ENCODE measurements at regions of chr6 and their contacts with region 1.

Region 1: GRCh38 chr6:72411872-72412708 is 209.8 kb upstream of the KCNQ5 start:
- DNase-seq: peak; percentile 72 to 89
- ATAC-seq: peak; percentile 98 to 100 (median 99)
- H3K4me3 ChIP-seq: no peak overlapping the region
- H3K4me3 Mint-ChIP-seq: no peak overlapping the region
- H3K27ac ChIP-seq: no peak overlapping the region
- H3K27ac Mint-ChIP-seq: no peak overlapping the region
- H3K4me1 ChIP-seq: no peaks in the 10 kb centered on the region
- H3K4me1 Mint-ChIP-seq: no peaks in the 10 kb centered on the region
- H3K27me3 ChIP-seq: no peaks in the 10 kb centered on the region
- H3K27me3 Mint-ChIP-seq: peaks cover 8 to 25% of the 10 kb centered on the region in 2 donors
- CTCF ChIP-seq: peak; percentile 100

Region 2: DNA sequence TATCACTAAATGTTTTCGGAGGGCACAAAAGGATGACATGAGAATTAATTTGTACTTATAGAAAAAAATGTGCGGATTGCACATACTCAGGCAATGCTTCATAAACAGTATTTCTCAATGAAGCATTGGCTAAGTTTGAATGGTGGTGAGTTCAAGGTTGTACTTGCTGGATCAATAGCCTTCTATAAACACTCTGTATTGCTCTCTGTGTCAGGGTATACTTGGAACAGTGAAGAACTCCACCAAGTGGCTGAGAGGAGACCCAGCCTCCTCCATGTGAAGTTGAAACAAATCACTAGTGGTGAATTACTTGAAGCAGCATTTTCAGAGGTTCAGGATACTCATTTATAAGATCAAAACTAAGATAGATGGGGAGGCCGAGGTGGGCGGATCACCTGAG is 165.2 kb before region 1 on chr6:
- intact Hi-C with region 1: no loop called
- DNase-seq: no peak
- ATAC-seq: no peak
- H3K4me3 ChIP-seq: no peak overlapping the region
- H3K4me3 Mint-ChIP-seq: no peak overlapping the region
- H3K27ac ChIP-seq: no peak overlapping the region
- H3K27ac Mint-ChIP-seq: no peak overlapping the region
- H3K4me1 ChIP-seq: no peaks in the 10 kb centered on the region
- H3K4me1 Mint-ChIP-seq: no peaks in the 10 kb centered on the region
- H3K27me3 ChIP-seq: no peaks in the 10 kb centered on the region
- H3K27me3 Mint-ChIP-seq: no peaks in the 10 kb centered on the region
- CTCF ChIP-seq: no peak

Region 3: DNA sequence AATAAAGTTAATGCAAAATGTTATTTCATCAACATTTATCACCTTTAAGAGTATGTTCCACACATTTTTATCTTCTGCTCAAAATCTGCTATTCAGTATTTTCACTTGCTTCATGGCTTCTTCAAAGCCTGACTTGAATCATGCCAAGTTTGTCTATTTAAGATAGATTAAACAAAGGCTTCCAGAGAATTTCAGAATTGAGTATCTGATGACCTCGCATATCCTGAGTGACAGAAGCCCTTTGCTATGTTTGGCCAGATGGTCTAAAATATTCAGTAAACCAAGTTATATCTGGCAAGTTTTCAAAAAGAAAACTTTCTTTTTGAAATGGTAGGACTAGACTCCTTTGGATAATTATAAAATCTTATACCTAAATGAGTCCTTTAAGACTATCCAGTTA is 139.1 kb before region 1 on chr6:
- intact Hi-C with region 1: no loop called
- DNase-seq: no peak
- ATAC-seq: no peak
- H3K4me3 ChIP-seq: no peak overlapping the region
- H3K4me3 Mint-ChIP-seq: no peak overlapping the region
- H3K27ac ChIP-seq: no peak overlapping the region
- H3K27ac Mint-ChIP-seq: no peak overlapping the region
- H3K4me1 ChIP-seq: no peaks in the 10 kb centered on the region
- H3K4me1 Mint-ChIP-seq: no peaks in the 10 kb centered on the region
- H3K27me3 ChIP-seq: no peaks in the 10 kb centered on the region
- H3K27me3 Mint-ChIP-seq: no peaks in the 10 kb centered on the region
- CTCF ChIP-seq: no peak

Region 4: GRCh38 chr6:72374857-72375256 is 37.2 kb before region 1 on chr6:
- intact Hi-C with region 1: no loop called
- DNase-seq: no peak
- ATAC-seq: no peak
- H3K4me3 ChIP-seq: no peak overlapping the region
- H3K4me3 Mint-ChIP-seq: no peak overlapping the region
- H3K27ac ChIP-seq: no peak overlapping the region
- H3K27ac Mint-ChIP-seq: no peak overlapping the region
- H3K4me1 ChIP-seq: no peaks in the 10 kb centered on the region
- H3K4me1 Mint-ChIP-seq: no peaks in the 10 kb centered on the region
- H3K27me3 ChIP-seq: no peaks in the 10 kb centered on the region
- H3K27me3 Mint-ChIP-seq: peaks cover 3 to 16% of the 10 kb centered on the region in 2 donors
- CTCF ChIP-seq: no peak

Region 5: GRCh38 chr6:72386324-72386723 is 25.8 kb before region 1 on chr6:
- intact Hi-C with region 1: no loop called
- DNase-seq: no peak
- ATAC-seq: no peak
- H3K4me3 ChIP-seq: no peak overlapping the region
- H3K4me3 Mint-ChIP-seq: no peak overlapping the region
- H3K27ac ChIP-seq: no peak overlapping the region
- H3K27ac Mint-ChIP-seq: no peak overlapping the region
- H3K4me1 ChIP-seq: no peaks in the 10 kb centered on the region
- H3K4me1 Mint-ChIP-seq: no peaks in the 10 kb centered on the region
- H3K27me3 ChIP-seq: peaks cover 2% of the 10 kb centered on the region
- H3K27me3 Mint-ChIP-seq: peaks cover 11 to 16% of the 10 kb centered on the region in 2 donors
- CTCF ChIP-seq: no peak

Region 6: GRCh38 chr6:73129653-73130443 is 717.8 kb after region 1 on chr6:
- intact Hi-C with region 1: loop called (anchors 1 kb)
- DNase-seq: peak; percentile 77 to 86
- ATAC-seq: peak; percentile 90 to 98 (median 95)
- H3K4me3 ChIP-seq: no peak overlapping the region
- H3K4me3 Mint-ChIP-seq: peak overlapping the region; percentile 14
- H3K27ac ChIP-seq: no peak overlapping the region
- H3K27ac Mint-ChIP-seq: no peak overlapping the region
- H3K4me1 ChIP-seq: peaks cover 3% of the 10 kb centered on the region
- H3K4me1 Mint-ChIP-seq: peaks cover 6% of the 10 kb centered on the region in 2 donors
- H3K27me3 ChIP-seq: no peaks in the 10 kb centered on the region
- H3K27me3 Mint-ChIP-seq: no peaks in the 10 kb centered on the region
- CTCF ChIP-seq: peak; percentile 94

Region 7: DNA sequence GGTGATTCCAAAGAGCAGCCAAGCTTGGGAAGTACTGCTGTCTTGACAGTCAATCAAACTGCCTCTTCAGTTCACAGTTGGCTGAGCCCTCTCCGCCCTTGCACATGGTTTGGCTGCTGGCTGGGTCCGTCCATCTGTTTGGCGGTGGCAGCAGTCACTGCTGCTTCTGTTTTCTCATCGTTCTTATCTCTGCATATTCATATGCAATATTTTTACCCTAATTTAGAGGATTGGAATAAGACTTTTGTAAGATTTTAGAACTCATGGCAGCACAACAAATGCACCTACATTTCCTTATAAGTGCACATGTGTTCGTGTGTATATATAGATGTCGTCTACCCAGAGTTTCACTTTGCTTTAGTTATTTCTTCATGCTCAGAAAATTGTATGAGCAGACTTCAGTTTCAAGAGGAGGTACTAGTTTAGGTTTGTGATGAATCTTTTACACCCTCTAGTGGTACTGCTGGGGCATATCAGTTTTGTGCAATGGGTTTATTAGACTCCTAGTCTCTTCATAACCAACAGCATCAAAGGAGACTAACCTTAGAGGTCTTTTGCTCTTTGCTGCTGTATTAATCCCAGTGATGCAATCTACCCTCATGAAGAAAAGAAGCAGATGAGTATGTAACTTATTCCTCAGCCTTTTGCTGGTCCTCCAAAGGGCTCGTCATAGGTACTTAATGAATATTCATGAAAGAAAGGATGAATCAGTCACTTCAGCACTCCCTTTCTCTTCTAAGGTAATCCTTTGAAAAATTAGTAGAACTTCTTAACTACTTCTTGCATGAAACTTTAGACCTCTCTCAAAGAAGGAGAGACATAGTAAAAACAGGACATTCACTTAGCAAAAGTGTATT is 768.9 kb after region 1 on chr6:
- intact Hi-C with region 1: loop called (anchors 1 kb)
- DNase-seq: peak in 1 of 2 donors; percentile 65
- ATAC-seq: peak; percentile 88 to 96 (median 92)
- H3K4me3 ChIP-seq: no peak overlapping the region
- H3K4me3 Mint-ChIP-seq: peak overlapping the region; percentile 63
- H3K27ac ChIP-seq: no peak overlapping the region
- H3K27ac Mint-ChIP-seq: peak overlapping the region in 1 of 2 donors; percentile 39
- H3K4me1 ChIP-seq: peaks cover 4% of the 10 kb centered on the region
- H3K4me1 Mint-ChIP-seq: peaks cover 6 to 8% of the 10 kb centered on the region in 2 donors
- H3K27me3 ChIP-seq: no peaks in the 10 kb centered on the region
- H3K27me3 Mint-ChIP-seq: no peaks in the 10 kb centered on the region
- CTCF ChIP-seq: peak; percentile 83

Region 8: DNA sequence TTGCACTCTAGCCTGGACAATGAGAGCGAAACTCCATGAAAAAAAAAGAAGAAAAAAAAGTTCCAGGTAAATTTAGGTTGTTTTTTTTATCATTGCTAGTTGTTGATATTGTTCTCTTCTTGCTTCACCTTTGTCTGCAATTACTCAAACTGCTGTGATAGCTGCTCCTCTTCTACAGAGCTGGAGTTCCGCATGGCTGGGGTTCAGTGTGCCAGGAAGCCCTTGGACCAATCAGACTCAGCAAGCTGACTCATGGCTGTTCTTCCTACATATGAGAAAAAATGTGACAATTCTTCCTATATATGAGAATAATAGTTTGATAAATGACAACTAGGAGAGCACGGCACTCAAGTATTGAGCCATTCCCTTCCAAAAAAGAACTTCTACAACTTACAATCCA is 913.6 kb after region 1 on chr6:
- intact Hi-C with region 1: loop called (anchors 1 kb)
- DNase-seq: no peak
- ATAC-seq: no peak
- H3K4me3 ChIP-seq: no peak overlapping the region
- H3K4me3 Mint-ChIP-seq: no peak overlapping the region
- H3K27ac ChIP-seq: no peak overlapping the region
- H3K27ac Mint-ChIP-seq: no peak overlapping the region
- H3K4me1 ChIP-seq: no peaks in the 10 kb centered on the region
- H3K4me1 Mint-ChIP-seq: peaks cover 0 to 4% of the 10 kb centered on the region in 2 donors
- H3K27me3 ChIP-seq: no peaks in the 10 kb centered on the region
- H3K27me3 Mint-ChIP-seq: peaks cover 10 to 24% of the 10 kb centered on the region in 2 donors
- CTCF ChIP-seq: no peak